PC-9 (cell line): ENCODE measurements at regions of chr7 and their contacts with region 1.

Region 1: GRCh38 chr7:119943942-119944600 is 328.9 kb upstream of the KCND2 start:
- DNase-seq: no peak
- H3K4me3 ChIP-seq: no peak overlapping the region
- H3K27ac ChIP-seq: no peak overlapping the region
- H3K4me1 ChIP-seq: no peaks in the 10 kb centered on the region
- H3K27me3 ChIP-seq: no peaks in the 10 kb centered on the region
- CTCF ChIP-seq: no peak

Region 2: GRCh38 chr7:119825091-119825655 is 118.9 kb before region 1 on chr7:
- CTCF ChIA-PET with region 1: interaction called, 11 read pairs
- POLR2A ChIA-PET with region 1: no interaction called
- intact Hi-C with region 1: no loop called
- DNase-seq: no peak
- H3K4me3 ChIP-seq: no peak overlapping the region
- H3K27ac ChIP-seq: no peak overlapping the region
- H3K4me1 ChIP-seq: no peaks in the 10 kb centered on the region
- H3K27me3 ChIP-seq: no peaks in the 10 kb centered on the region
- CTCF ChIP-seq: no peak

Region 3: DNA sequence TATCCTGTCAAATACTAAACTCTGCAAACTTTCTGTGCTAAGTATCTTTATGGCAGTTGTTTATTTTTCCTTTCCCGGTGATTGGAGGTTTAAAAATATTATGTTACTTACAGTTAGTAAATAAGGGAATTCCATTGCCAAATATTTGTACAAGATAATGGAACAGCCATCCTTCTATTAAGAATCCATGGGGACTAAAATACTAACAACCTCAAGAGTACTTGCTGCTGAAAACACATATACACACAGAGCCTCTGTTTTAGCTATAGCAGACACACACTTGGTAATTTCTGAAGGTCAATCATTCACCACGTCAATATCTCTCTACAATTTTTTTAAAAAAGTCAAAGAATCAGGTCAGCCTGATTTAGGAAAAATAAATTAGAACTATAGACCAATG is 881.5 kb after region 1 on chr7:
- CTCF ChIA-PET with region 1: no interaction called
- POLR2A ChIA-PET with region 1: no interaction called
- intact Hi-C with region 1: no loop called
- DNase-seq: no peak
- H3K4me3 ChIP-seq: no peak overlapping the region
- H3K27ac ChIP-seq: no peak overlapping the region
- H3K4me1 ChIP-seq: no peaks in the 10 kb centered on the region
- H3K27me3 ChIP-seq: no peaks in the 10 kb centered on the region
- CTCF ChIP-seq: no peak